Breast epithelium (tissue), 4 donors: ENCODE measurements at regions of chr9 and their contacts with region 1.

Region 1: DNA sequence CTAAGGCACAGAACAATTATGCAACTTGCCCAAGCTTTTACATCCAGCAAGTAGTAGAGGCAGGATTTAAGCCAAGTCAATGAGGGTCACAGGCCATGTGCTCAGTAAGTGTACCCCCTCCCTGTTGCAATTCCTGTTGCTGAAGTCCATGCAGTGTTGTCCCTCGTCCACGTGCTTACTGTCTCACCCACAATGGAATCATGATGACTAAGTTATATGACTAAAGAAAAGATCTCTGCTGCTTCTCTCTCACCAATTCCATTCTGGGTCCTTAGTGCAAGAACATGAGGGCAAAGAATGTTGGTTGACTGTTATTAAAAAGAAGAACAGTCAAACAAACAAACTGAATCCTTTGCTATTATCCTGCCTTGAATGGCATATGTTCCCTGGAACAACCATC is 233.6 kb upstream of the SLC24A2 start:
- DNase-seq: no peak
- H3K4me3 ChIP-seq: no peak overlapping the region
- H3K27ac ChIP-seq: no peak overlapping the region
- H3K4me1 ChIP-seq: no peaks in the 10 kb centered on the region
- H3K27me3 ChIP-seq: no peaks in the 10 kb centered on the region
- CTCF ChIP-seq: no peak
- POLR2A ChIP-seq: no peak

Region 2: DNA sequence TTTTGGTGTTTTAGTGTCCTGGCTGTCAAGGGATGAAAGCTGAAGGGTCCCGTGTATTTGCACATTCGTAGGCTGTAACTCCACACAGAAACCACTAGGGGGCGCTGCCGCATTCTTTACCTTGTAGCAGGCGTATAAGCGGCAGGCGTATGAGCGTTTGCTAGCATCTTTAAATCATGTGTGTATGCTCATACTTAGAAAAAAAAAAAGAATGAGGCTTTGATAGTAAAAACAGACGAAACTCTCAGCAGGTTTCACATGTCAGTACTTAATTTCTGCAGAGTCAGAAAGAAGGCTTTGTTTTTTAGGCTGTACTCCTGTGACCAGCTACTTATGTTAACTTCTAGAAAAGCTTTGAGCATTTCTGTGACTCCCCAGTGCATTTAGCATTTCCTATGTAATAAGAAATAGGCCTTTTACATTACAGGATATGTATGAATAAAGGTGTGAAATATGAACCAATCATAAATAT is 1767.2 kb before region 1 on chr9:
- intact Hi-C with region 1: no loop called
- DNase-seq: peak; percentile 49 to 80
- H3K4me3 ChIP-seq: no peak overlapping the region
- H3K27ac ChIP-seq: no peak overlapping the region
- H3K4me1 ChIP-seq: no peaks in the 10 kb centered on the region
- H3K27me3 ChIP-seq: no peaks in the 10 kb centered on the region
- CTCF ChIP-seq: peak; percentile 87 to 94 (median 88)
- POLR2A ChIP-seq: no peak

Region 3: DNA sequence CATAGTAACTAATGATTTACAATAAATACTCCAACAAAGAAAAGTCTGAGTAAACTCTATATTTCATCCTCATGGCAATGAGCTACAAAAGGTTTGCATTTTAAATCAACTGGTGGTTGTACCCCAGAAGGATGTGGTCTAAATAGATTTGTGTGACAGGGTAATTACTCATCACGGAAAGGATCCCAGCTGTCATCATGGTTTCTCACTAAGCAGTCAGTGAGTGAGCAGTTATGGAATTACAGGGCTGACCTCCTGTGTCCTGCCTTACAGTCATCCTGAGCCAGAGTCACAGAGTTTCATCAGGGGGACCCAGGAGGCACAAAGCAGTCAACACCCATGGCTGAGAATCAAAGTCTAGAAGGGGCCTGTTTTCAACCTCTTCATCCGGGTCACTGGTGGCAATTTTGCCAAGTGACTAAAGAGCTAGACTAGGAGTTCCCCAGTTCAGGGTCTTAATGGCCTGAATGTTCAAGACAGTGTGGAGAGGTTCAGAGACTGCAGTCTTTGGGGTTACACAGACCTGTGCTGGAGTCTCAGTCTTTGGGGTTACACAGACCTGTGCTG is 22.8 kb before region 1 on chr9:
- intact Hi-C with region 1: no loop called
- DNase-seq: no peak
- H3K4me3 ChIP-seq: no peak overlapping the region
- H3K27ac ChIP-seq: no peak overlapping the region
- H3K4me1 ChIP-seq: no peaks in the 10 kb centered on the region
- H3K27me3 ChIP-seq: no peaks in the 10 kb centered on the region
- CTCF ChIP-seq: no peak
- POLR2A ChIP-seq: no peak

Region 4: DNA sequence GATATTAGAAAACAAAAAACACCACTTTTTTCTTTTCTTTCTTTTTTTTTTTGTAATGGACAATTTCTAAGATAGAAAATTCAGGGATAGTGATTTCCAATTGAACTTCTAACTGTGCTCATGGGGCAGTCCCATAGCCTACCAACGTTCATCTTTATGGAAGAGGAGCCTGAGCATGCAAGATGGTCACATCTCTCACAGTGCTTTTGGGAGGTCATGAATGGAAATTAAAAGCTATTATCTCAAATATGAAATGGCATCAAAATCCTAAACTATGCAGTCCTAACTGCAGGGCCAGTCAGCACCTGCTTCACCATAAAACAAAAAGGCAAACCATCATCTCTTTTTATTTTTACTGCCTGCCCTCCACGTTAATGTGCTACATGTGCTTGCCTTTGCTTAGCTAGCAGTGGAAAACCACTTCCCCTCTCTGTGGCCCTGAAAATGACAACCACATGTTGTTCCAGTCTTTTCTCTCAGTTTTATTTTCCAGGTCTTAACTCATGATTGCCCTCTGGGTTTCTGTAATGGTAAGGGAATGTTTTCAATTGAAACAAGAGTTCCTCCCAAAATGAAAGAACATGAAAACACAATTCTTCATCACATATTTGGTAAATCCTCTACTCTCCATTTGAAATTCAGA is 1038.6 kb after region 1 on chr9:
- intact Hi-C with region 1: loop called (anchors 10 kb)
- DNase-seq: no peak
- H3K4me3 ChIP-seq: no peak overlapping the region
- H3K27ac ChIP-seq: no peak overlapping the region
- H3K4me1 ChIP-seq: no peaks in the 10 kb centered on the region
- H3K27me3 ChIP-seq: no peaks in the 10 kb centered on the region
- CTCF ChIP-seq: no peak
- POLR2A ChIP-seq: no peak